ENCODE measurements at regions of chr11 and their contacts with region 1.

Region 1: DNA sequence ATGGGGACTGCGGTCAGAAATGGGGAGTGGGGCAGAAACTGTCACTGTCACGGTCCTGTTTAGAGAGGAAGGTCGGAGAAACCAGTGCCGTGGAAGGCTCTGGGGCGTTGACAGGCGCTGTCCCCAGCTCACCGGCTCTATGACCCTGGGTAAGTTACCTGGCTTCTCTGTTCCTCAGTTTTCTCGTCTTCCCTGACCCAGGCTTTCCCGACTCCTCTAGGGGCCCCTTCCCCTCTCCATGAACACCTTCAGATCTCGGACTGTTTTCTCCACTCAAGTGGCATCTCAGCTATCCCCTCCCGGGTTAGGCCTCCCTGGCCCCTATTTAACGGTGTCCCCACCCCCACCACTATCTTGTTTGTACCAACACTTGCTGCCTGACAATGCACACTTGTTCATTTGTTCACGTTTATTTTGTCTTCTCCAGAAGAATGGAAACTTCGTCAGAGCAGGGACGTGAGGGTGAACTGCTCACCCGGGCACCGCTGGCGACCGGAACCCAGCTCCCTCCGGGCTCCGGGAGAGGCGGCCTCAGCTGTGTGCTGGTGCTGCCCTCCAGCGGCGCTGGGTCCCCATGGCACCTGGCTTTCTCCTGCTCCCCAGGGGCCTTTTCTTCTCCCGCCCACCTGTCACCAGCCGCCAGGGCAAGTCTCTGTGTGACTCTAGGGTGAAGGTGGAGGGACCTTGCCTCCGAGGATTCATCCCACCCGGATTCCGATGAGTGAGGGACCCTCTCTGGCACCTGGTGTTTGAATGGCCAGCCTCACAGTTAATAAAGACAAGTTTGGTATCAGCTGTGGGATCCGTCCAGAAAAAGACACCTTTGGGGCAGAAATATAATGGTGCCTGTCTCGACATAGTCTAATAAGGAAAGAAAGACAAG is 33.1 kb upstream of the SLC35C1 start:
- DNase-seq: peak; percentile 87
- H3K4me3 Mint-ChIP-seq: peak overlapping the region; percentile 73
- H3K27ac Mint-ChIP-seq: peak overlapping the region; percentile 53
- H3K4me1 Mint-ChIP-seq: peaks cover 18% of the 10 kb centered on the region
- H3K27me3 Mint-ChIP-seq: peaks cover 32% of the 10 kb centered on the region

Region 2: GRCh38 chr11:45267052-45267451 is 504.8 kb before region 1 on chr11:
- CTCF ChIA-PET with region 1: no interaction called
- DNase-seq: peak; percentile 36
- H3K4me3 Mint-ChIP-seq: no peak overlapping the region
- H3K27ac Mint-ChIP-seq: no peak overlapping the region
- H3K4me1 Mint-ChIP-seq: no peaks in the 10 kb centered on the region
- H3K27me3 Mint-ChIP-seq: peaks cover 41% of the 10 kb centered on the region

Region 3: GRCh38 chr11:45339729-45340519 is 431.9 kb before region 1 on chr11:
- CTCF ChIA-PET with region 1: interaction called, 18 read pairs
- DNase-seq: peak; percentile 94
- H3K4me3 Mint-ChIP-seq: peak overlapping the region; percentile 23
- H3K27ac Mint-ChIP-seq: no peak overlapping the region
- H3K4me1 Mint-ChIP-seq: peaks cover 11% of the 10 kb centered on the region
- H3K27me3 Mint-ChIP-seq: peaks cover 24% of the 10 kb centered on the region

Region 4: DNA sequence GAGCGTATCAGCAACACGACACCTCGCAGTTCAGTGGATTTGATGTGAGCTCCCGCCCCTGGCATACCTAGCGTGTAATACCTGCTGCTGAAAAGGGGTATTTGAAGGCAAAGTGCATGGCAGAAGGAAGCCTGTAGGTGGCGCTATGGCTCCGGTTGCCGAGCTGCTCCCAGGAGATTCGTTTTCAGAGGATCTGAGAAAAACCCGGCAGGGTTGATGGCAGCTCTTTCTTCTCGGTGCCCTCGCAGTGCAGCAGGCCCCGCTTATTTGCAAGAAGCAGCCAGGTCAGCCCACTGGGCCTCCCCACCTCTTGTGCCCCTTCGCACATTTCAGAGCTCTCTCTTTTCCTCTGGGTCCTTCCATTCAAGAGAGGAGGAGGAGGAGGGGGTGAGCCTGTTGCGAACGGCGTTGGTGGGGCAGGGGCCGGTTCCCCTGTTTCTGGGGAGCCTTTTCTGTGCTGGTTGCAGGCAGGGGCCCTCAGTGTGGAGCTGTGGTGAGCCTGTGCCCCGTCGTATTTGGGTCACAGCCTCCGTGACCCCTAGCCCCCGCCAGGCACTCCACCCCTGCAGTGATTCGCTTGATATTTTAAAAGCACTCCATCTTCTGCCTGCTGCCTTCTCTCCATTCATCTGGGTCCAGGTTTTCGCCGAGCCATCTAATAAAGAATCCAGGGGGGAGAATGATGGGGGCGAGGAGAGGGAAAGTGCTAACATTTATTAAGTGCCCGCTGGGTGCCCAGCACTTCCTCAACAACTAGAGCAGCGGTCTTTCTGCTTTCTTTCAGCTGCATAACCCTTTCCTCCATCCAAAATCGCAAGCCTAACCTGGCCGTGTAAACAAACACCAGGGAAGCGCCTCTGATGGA is 400.3 kb before region 1 on chr11:
- CTCF ChIA-PET with region 1: interaction called, 42 read pairs
- DNase-seq: peak; percentile 76
- H3K4me3 Mint-ChIP-seq: no peak overlapping the region
- H3K27ac Mint-ChIP-seq: no peak overlapping the region
- H3K4me1 Mint-ChIP-seq: peaks cover 5% of the 10 kb centered on the region
- H3K27me3 Mint-ChIP-seq: peaks cover 70% of the 10 kb centered on the region

Region 5: DNA sequence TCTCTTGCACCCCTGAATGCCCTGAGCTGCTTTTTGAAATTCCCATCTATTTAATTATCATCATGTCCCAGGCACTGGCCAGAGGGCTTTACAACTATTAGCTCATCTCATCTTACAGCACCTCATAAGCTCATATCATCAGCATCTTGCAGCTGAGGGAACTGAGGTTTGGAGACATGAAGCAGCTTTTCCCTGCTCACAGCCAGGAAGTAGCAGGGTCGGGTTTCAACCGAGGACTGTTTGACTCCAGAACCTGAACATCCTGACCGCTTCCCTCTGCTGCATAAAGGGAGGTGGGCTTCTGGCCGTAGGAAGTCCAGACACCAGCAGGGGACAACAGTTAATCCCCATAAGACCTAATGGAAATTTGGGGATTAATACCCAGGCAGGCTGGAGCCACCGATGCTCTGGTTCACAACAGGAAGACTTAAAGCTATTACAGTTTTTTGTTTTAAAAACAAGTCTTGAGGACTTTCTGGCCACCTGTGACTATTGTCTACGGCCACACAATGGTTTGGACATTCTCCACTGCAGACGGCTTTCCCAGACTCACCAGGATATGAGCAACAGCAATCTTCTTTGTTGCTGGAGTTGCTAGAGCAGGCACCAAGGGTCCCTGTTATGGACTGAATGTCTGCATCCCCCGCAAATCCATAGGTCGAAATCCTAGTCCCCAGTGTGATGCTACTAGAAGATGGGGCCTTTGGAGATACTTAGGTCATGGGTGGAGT is 153.8 kb before region 1 on chr11:
- CTCF ChIA-PET with region 1: no interaction called
- DNase-seq: no peak
- H3K4me3 Mint-ChIP-seq: no peak overlapping the region
- H3K27ac Mint-ChIP-seq: no peak overlapping the region
- H3K4me1 Mint-ChIP-seq: no peaks in the 10 kb centered on the region
- H3K27me3 Mint-ChIP-seq: peaks cover 21% of the 10 kb centered on the region

Region 6: GRCh38 chr11:45761659-45762058 is 10.1 kb before region 1 on chr11:
- CTCF ChIA-PET with region 1: interaction called, 16 read pairs
- DNase-seq: no peak
- H3K4me3 Mint-ChIP-seq: no peak overlapping the region
- H3K27ac Mint-ChIP-seq: no peak overlapping the region
- H3K4me1 Mint-ChIP-seq: no peaks in the 10 kb centered on the region
- H3K27me3 Mint-ChIP-seq: peaks cover 33% of the 10 kb centered on the region

Region 7: DNA sequence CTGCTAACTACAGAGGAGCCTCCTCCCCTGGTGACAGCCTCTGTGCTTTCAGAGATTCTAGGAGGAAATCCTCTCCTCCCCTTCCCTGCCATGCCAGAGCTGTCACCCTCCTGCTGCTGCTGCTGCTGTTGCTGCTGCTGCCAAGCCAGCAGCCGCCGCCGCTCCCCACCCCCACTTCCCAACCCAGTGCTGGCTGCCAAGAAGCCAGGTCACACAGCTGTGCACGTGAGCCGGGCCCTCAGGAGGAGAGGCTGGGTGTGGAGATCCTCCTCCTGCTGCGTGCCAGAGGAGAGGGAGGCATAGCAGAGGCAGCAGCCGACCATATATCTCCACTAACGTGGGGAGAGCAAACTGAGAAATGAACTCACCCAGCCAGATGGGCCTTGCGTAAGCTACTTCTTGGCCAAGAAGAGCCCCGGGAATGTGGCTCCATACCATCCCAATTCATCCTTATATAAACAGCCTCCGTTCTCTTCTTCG is 87.9 kb after region 1 on chr11:
- CTCF ChIA-PET with region 1: no interaction called
- DNase-seq: no peak
- H3K4me3 Mint-ChIP-seq: no peak overlapping the region
- H3K27ac Mint-ChIP-seq: peak overlapping the region; percentile 55
- H3K4me1 Mint-ChIP-seq: no peaks in the 10 kb centered on the region
- H3K27me3 Mint-ChIP-seq: no peaks in the 10 kb centered on the region

Region 8: DNA sequence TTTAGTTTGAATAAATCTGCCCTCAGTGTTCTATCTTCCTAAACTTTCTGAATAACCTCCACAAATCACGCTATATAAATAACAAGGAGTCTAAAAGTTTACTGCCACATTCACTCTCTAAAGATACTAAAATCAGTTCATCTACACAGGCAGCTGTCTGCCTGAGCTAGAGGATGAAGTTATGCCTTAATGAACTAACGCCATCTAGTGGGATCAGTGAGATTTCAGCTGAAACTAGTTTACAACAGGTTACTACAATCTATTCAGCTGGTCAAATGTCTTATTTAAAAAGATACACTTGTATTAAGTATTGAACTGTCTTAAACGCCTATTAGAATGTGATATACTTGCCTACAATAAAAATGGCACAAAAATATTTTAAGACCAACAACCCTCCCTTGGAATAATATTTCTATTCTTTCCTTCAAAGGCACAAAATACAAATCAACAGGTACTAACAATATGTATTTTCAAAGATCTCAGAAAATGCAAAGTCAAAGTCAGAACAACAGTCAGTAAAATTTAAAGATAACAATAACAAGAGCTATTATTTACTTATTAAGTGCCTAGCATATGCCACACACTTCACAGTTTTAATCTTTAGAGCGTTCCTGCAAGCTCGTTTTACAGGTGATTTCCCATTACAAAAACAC is 234.7 kb after region 1 on chr11:
- CTCF ChIA-PET with region 1: interaction called, 14 read pairs
- DNase-seq: peak; percentile 33
- H3K4me3 Mint-ChIP-seq: no peak overlapping the region
- H3K27ac Mint-ChIP-seq: no peak overlapping the region
- H3K4me1 Mint-ChIP-seq: no peaks in the 10 kb centered on the region
- H3K27me3 Mint-ChIP-seq: no peaks in the 10 kb centered on the region